Mammary epithelial cell (primary cell): ENCODE measurements at regions of chr11 and their contacts with region 1.

Region 1: DNA sequence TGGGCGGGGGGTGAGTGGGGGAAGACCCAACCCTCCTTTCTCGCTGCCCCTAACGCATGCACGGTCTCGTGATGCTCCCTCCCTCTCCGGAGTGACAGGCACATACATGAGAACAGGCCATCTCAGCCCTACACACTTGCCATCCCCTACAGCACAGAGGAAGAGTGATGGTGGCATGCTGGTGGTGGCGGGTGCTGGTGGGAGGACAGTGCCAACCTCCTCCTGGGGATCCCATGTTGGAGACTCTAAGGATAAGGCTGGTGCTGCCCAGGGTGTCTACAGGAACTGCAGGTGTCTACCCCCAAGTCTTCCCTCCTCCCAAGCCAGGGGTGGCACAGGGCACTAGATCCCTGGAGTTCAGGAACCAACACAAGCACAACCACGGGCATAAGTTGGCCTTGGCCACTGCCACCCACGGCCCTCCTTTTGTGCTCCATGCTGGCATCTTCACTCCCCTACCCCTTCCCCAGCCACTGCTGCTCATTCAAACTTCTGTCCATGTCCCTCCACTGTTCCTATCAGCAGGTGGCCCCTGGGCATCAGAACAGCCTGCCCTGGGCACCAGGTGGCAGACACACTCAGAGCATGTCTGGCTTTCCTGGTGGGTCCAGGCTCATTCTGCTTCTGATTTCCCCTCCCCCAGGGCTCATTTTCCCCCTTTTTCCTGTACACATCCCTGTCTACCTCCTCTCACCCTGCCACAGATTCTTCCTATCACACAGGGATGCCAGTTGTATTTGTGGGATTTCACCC is 6.5 kb upstream of the NLRX1 start:
- DNase-seq: no peak
- H3K4me3 ChIP-seq: no peak overlapping the region
- H3K27ac ChIP-seq: no peak overlapping the region
- H3K4me1 ChIP-seq: peaks cover 14% of the 10 kb centered on the region
- H3K27me3 ChIP-seq: no peaks in the 10 kb centered on the region
- CTCF ChIP-seq: no peak

Region 2: GRCh38 chr11:119295178-119295577 is 133.1 kb after region 1 on chr11:
- CTCF ChIA-PET with region 1: no interaction called
- dilution Hi-C with region 1: no loop called
- in situ Hi-C with region 1: no loop called
- intact Hi-C with region 1: no loop called
- DNase-seq: peak; percentile 67
- H3K4me3 ChIP-seq: no peak overlapping the region
- H3K27ac ChIP-seq: peak overlapping the region; percentile 48
- H3K4me1 ChIP-seq: no peaks in the 10 kb centered on the region
- H3K27me3 ChIP-seq: no peaks in the 10 kb centered on the region
- CTCF ChIP-seq: peak; percentile 10 to 37

Region 3: DNA sequence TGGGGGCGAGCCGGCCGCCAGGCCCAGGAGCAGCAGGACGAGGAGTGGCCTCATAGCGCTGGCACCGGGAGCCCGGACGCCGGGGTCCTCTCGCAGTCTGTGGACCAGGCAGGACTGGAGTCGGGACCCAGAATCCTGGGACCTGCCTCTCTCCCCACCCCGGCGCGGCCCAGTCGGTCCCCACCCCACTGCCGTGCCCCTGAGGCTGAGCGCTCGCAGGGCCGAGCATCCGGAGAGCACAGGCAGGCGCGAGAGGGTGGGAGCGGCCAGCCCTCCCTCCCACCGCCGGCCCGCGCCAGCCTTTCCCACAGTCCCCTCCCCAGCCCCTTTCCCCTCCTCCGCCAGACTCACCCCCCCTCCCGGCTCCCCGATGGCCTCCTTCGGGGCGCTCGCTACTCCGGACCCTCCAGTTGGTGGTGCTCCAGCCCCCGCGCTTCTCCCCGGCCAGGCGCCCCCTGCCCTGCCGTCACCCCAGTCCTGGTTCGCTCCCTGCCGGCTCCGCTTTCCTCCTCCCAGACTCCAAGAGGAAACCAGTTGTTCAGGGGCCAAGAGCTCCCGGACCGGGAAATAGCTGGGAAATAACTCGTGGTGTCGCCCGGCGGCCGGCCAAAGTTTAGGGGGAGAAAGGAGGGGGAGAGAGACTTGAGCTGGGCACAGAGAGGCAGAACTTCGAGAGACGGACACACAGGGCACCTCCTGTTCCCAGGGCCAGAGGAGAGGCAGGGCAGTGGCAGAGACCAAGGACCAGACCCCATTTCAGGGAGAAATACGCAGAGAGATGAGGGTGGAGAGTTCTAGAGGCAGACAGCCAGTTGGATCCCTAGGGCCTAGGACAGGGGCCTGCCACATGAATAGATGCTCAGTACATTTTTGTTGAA is 178.5 kb after region 1 on chr11 and contains the start of gene C1QTNF5:
- CTCF ChIA-PET with region 1: interaction called, 21 read pairs
- dilution Hi-C with region 1: no loop called
- in situ Hi-C with region 1: no loop called
- intact Hi-C with region 1: no loop called
- DNase-seq: no peak
- H3K4me3 ChIP-seq: peak within 1 kb of the TSS in 2 of 3 experiments; percentile 23 to 41
- H3K27ac ChIP-seq: no peak within 1 kb of the TSS
- H3K4me1 ChIP-seq: peaks cover 21% of the 10 kb centered on the region
- H3K27me3 ChIP-seq: peaks cover 12% of the 10 kb centered on the region
- CTCF ChIP-seq: no peak
- total RNA-seq, gene C1QTNF5: 0.50 TPM in 1 of 2 donors, not detected in the other